ENCODE measurements at regions of chr3 and their contacts with region 1.

Region 1: GRCh38 chr3:12462159-12462947 is 21.9 kb upstream of the TSEN2 start:
- DNase-seq: peak; percentile 18
- H3K4me3 ChIP-seq: no peak overlapping the region
- H3K27ac ChIP-seq: no peak overlapping the region
- H3K4me1 ChIP-seq: peaks cover 14% of the 10 kb centered on the region
- H3K27me3 ChIP-seq: no peaks in the 10 kb centered on the region
- CTCF ChIP-seq: no peak
- POLR2A ChIP-seq: no peak

Region 2: DNA sequence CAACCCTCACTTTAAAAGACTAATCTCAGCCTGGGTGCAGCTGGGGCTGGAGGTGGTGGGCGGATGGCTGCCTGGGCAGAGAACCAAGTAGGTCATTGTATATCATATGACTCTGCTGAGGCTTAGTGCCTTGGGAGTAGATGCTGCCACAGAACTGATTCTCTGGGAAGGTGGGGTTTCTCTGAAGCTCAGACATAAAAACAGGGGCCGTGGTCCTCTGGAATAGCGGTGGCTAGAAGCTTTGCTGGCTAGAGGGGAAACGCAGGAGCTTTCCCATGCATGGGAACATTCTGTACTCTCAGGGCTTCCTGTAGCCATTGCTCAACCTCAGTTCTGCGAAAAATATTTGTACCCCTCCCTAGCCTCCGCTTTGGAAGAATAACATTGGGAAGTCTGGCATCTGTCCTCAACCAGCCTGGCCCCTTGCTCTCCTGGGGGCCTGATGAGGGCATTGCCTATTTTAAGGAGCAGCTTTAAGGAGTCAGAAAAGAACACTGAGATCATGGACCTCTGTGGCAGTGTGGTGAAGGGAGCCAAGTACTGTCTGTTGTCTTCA is 318.3 kb before region 1 on chr3:
- CTCF ChIA-PET with region 1: no interaction called
- POLR2A ChIA-PET with region 1: no interaction called
- dilution Hi-C with region 1: loop called (anchors 10 kb)
- intact Hi-C with region 1: no loop called
- DNase-seq: no peak
- H3K4me3 ChIP-seq: no peak overlapping the region
- H3K27ac ChIP-seq: no peak overlapping the region
- H3K4me1 ChIP-seq: no peaks in the 10 kb centered on the region
- H3K27me3 ChIP-seq: peaks cover 5 to 8% of the 10 kb centered on the region in 2 experiments
- CTCF ChIP-seq: no peak
- POLR2A ChIP-seq: no peak

Region 3: GRCh38 chr3:12395349-12396012 is 66.9 kb before region 1 on chr3:
- CTCF ChIA-PET with region 1: no interaction called
- POLR2A ChIA-PET with region 1: no interaction called
- dilution Hi-C with region 1: no loop called
- intact Hi-C with region 1: no loop called
- DNase-seq: no peak
- H3K4me3 ChIP-seq: no peak overlapping the region
- H3K27ac ChIP-seq: no peak overlapping the region
- H3K4me1 ChIP-seq: peaks cover 3% of the 10 kb centered on the region
- H3K27me3 ChIP-seq: peaks cover 0 to 2% of the 10 kb centered on the region in 2 experiments
- CTCF ChIP-seq: no peak
- POLR2A ChIP-seq: no peak

Region 4: GRCh38 chr3:12405432-12406272 is 56.7 kb before region 1 on chr3:
- CTCF ChIA-PET with region 1: no interaction called
- POLR2A ChIA-PET with region 1: no interaction called
- dilution Hi-C with region 1: no loop called
- intact Hi-C with region 1: loop called (anchors 5 kb)
- DNase-seq: peak; percentile 98
- H3K4me3 ChIP-seq: peak overlapping the region in 1 of 3 experiments; percentile 10
- H3K27ac ChIP-seq: peak overlapping the region; percentile 61
- H3K4me1 ChIP-seq: peaks cover 24% of the 10 kb centered on the region
- H3K27me3 ChIP-seq: no peaks in the 10 kb centered on the region
- CTCF ChIP-seq: no peak
- POLR2A ChIP-seq: no peak

Measured in endothelial cell of umbilical vein (primary cell).